CD8-positive, alpha-beta T cell (primary cell): ENCODE measurements at regions of chr1 and their contacts with region 1.

Region 1: GRCh38 chr1:172089768-172090510 is 248.6 kb downstream of the DNM3 start:
- DNase-seq: peak; percentile 13 to 74 (median 54)
- ATAC-seq: peak; percentile 84
- H3K4me3 ChIP-seq: no peak overlapping the region
- H3K4me3 Mint-ChIP-seq: no peak overlapping the region
- H3K27ac ChIP-seq: no peak overlapping the region
- H3K27ac Mint-ChIP-seq: no peak overlapping the region
- H3K4me1 ChIP-seq: peaks cover 4% of the 10 kb centered on the region
- H3K4me1 Mint-ChIP-seq: peaks cover 4% of the 10 kb centered on the region
- H3K27me3 ChIP-seq: no peaks in the 10 kb centered on the region
- H3K27me3 Mint-ChIP-seq: no peaks in the 10 kb centered on the region
- CTCF ChIP-seq: peak; percentile 66

Region 2: DNA sequence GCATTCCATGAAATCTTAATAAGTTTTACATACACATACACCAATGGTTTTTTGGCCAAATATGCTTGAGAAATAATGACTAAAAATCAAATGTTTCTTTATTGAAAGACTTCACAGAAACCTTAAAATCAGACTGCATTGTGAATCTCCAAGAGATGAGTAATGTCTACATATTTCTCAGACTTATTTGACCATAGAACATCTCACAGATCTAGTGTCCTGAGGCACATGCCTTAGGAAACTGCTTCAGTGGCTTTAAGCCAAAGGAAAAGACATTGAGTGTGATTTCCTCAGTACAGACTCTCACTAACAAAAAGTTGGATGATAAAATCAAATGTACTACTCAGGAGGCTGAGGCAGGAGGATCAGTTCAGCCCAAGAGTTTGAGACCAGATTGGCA is 324.4 kb after region 1 on chr1:
- CTCF ChIA-PET with region 1: interaction called, 11 read pairs
- POLR2A ChIA-PET with region 1: no interaction called
- intact Hi-C with region 1: no loop called
- DNase-seq: no peak
- ATAC-seq: no peak
- H3K4me3 ChIP-seq: no peak overlapping the region
- H3K4me3 Mint-ChIP-seq: no peak overlapping the region
- H3K27ac ChIP-seq: no peak overlapping the region
- H3K27ac Mint-ChIP-seq: no peak overlapping the region
- H3K4me1 ChIP-seq: no peaks in the 10 kb centered on the region
- H3K4me1 Mint-ChIP-seq: peaks cover 9% of the 10 kb centered on the region
- H3K27me3 ChIP-seq: no peaks in the 10 kb centered on the region
- H3K27me3 Mint-ChIP-seq: no peaks in the 10 kb centered on the region
- CTCF ChIP-seq: no peak

Region 3: DNA sequence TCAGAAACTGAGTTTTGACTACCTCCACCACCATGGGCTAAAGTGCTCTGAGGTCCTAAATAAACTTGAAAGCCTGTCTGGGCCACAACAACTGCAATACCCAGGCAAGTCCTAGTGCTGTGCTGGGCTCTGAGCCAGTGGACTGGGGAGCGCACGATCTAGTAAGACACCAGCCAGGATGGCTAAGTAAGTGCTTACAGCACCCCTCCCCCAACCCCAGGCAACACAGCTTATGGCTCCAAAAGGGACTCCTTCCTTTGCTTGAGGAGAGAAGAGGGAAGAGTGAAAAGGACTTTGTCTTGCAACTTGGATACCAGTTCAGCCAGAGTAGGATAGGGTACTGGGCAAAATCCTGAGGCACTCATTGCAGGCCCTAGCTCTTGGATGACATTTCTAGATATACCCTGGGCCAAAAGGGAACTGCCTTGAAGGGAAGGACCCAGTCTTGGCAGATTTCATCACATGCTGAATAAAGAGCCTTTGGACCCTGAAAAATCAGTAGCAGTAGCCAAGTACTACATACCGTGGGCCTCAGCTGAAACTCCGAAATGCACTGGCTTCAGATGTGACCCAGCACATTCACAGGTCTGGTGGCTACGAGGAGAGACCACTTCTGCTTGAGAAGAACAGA is 332.1 kb after region 1 on chr1:
- CTCF ChIA-PET with region 1: interaction called, 11 read pairs
- POLR2A ChIA-PET with region 1: no interaction called
- intact Hi-C with region 1: no loop called
- DNase-seq: no peak
- ATAC-seq: no peak
- H3K4me3 ChIP-seq: no peak overlapping the region
- H3K4me3 Mint-ChIP-seq: no peak overlapping the region
- H3K27ac ChIP-seq: no peak overlapping the region
- H3K27ac Mint-ChIP-seq: no peak overlapping the region
- H3K4me1 ChIP-seq: peaks cover 6% of the 10 kb centered on the region
- H3K4me1 Mint-ChIP-seq: peaks cover 22% of the 10 kb centered on the region
- H3K27me3 ChIP-seq: no peaks in the 10 kb centered on the region
- H3K27me3 Mint-ChIP-seq: no peaks in the 10 kb centered on the region
- CTCF ChIP-seq: no peak